ENCODE measurements at regions of chr11 and their contacts with region 1.

Region 1: DNA sequence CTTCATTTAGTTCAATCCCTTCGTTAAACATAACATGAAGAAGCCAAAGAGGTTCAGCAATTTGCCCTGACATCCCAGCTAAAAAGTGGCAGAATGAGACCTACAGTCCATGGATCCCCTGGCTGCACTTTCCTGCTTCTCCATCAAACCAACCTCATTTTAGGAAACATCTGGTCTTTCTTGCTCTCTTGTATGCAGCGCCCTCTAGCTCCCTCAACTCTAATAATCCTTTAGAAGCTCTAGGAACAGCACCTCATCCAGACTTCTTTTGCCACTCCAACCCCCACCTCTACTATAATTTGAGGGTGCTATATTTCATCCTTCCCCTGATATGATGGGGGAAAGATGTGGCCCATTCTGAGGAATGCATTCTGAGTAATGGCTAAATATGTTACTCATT is 7.4 kb downstream of the CNTF start:
- DNase-seq: peak; percentile 45
- ATAC-seq: peak; percentile 70
- H3K4me3 Mint-ChIP-seq: no peak overlapping the region
- H3K27ac Mint-ChIP-seq: peak overlapping the region; percentile 18
- H3K4me1 Mint-ChIP-seq: peaks cover 9% of the 10 kb centered on the region
- H3K27me3 Mint-ChIP-seq: no peaks in the 10 kb centered on the region
- CTCF ChIP-seq: peak; percentile 43

Region 2: GRCh38 chr11:58043379-58043778 is 586.5 kb before region 1 on chr11:
- CTCF ChIA-PET with region 1: no interaction called
- POLR2A ChIA-PET with region 1: no interaction called
- intact Hi-C with region 1: no loop called
- DNase-seq: no peak
- ATAC-seq: no peak
- H3K4me3 Mint-ChIP-seq: no peak overlapping the region
- H3K27ac Mint-ChIP-seq: no peak overlapping the region
- H3K4me1 Mint-ChIP-seq: no peaks in the 10 kb centered on the region
- H3K27me3 Mint-ChIP-seq: peaks cover 11% of the 10 kb centered on the region
- CTCF ChIP-seq: no peak

Region 3: GRCh38 chr11:58513747-58514367 is 116.0 kb before region 1 on chr11:
- CTCF ChIA-PET with region 1: no interaction called
- POLR2A ChIA-PET with region 1: no interaction called
- intact Hi-C with region 1: no loop called
- DNase-seq: peak; percentile 35
- ATAC-seq: peak; percentile 58
- H3K4me3 Mint-ChIP-seq: no peak overlapping the region
- H3K27ac Mint-ChIP-seq: no peak overlapping the region
- H3K4me1 Mint-ChIP-seq: no peaks in the 10 kb centered on the region
- H3K27me3 Mint-ChIP-seq: no peaks in the 10 kb centered on the region
- CTCF ChIP-seq: peak; percentile 47

Region 4: DNA sequence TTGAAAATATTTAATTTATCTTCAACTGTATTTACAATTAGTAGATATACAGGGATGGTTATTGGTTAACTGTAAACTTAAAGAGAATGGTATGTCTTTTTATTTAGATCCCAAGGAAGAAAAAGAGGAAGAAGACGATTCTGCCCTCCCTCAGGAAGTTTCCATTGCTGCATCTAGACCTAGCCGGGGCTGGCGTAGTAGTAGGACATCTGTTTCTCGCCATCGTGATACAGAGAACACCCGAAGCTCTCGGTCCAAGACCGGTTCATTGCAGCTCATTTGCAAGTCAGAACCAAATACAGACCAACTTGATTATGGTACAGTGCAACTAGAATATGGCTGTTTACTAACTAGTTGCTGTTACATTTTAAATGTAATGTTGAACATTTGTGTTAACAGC is 20.1 kb before region 1 on chr11:
- CTCF ChIA-PET with region 1: interaction called, 17 read pairs
- POLR2A ChIA-PET with region 1: no interaction called
- intact Hi-C with region 1: no loop called
- DNase-seq: no peak
- ATAC-seq: no peak
- H3K4me3 Mint-ChIP-seq: no peak overlapping the region
- H3K27ac Mint-ChIP-seq: no peak overlapping the region
- H3K4me1 Mint-ChIP-seq: peaks cover 54% of the 10 kb centered on the region
- H3K27me3 Mint-ChIP-seq: no peaks in the 10 kb centered on the region
- CTCF ChIP-seq: no peak

Region 5: DNA sequence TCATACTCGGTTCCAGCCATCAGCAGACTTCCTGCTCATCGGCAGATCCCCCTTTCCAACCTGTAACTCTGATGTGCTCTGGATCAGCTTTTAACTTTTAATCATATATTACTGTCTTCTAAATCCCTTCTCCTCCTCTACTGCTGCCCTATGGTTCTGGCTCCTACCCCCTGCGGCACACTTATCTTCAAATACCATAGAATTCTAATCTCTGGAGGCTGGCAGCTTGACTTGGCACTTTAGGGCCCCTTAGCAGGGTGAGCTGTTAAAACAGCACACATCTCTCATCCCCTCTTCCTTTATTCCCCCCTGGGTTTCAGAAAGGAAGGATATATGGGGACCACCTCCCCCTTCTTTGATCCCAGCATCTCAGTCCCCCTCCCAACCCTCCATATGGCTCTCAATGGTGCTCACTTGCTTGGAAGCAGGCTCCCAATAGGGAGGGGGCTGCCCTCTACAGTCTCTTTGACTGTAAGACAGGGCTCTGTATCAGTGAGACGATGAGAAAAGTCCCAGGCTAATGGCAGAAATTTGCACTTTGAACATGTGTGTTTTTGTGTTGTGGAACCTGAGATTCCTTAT is 11.8 kb before region 1 on chr11:
- CTCF ChIA-PET with region 1: interaction called, 17 read pairs
- POLR2A ChIA-PET with region 1: interaction called, 3 read pairs
- intact Hi-C with region 1: no loop called
- DNase-seq: peak; percentile 15
- ATAC-seq: peak; percentile 67
- H3K4me3 Mint-ChIP-seq: no peak overlapping the region
- H3K27ac Mint-ChIP-seq: peak overlapping the region; percentile 27
- H3K4me1 Mint-ChIP-seq: peaks cover 32% of the 10 kb centered on the region
- H3K27me3 Mint-ChIP-seq: no peaks in the 10 kb centered on the region
- CTCF ChIP-seq: peak; percentile 17

Region 6: DNA sequence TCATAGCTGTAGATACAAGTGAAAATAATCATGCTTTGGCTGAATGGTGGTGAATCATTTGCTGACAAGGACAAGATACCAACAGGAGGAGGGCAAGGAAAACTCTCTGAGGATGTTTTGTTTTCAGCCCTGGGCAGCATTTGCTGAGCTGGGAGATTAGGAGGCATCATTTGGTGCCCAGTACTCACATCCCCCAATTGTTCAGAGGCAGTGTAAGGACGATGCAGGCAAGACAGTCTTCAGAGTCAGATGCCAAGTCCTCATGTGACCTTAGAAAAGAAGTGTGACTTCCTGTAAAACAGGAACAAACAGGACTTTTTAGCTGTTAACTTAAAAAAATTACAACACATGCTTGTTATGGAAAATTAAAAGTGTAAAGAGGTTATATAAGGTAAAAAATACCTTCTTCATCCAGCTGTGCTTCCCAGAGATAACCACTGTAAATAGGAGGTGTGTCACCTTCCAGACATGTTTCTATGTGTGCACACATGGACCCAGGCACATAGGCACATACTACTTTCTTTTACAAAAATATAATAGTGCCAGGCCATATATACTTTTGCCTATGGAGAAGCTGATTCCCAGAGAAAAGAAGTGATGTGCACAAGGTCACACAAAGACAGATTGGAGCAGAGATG is 10.6 kb after region 1 on chr11:
- CTCF ChIA-PET with region 1: interaction called, 27 read pairs
- POLR2A ChIA-PET with region 1: interaction called, 4 read pairs
- intact Hi-C with region 1: no loop called
- DNase-seq: no peak
- ATAC-seq: peak; percentile 77
- H3K4me3 Mint-ChIP-seq: no peak overlapping the region
- H3K27ac Mint-ChIP-seq: peak overlapping the region; percentile 50
- H3K4me1 Mint-ChIP-seq: peaks cover 25% of the 10 kb centered on the region
- H3K27me3 Mint-ChIP-seq: no peaks in the 10 kb centered on the region
- CTCF ChIP-seq: no peak

Region 7: DNA sequence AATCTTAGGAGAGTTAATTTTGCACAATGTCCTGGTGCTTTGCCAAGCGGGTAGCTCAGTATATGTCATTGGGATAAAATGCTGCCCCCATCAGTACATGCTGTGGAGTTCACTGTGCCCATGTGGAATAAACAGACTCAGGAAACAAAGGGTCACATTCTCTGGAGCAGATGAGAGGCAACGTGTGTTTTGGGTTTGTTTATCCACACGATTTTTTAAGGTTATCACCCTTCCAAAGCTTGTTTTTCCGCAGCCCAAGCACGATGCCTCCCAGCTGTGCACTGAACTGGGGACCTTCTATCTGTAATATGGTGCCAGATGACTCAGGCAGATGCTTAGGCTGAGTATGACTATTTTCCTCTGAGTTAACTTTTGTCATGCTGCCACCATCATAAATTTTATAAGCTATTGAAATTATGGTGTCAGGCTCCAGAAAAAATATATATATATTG is 833.4 kb after region 1 on chr11:
- CTCF ChIA-PET with region 1: no interaction called
- POLR2A ChIA-PET with region 1: no interaction called
- intact Hi-C with region 1: no loop called
- DNase-seq: no peak
- ATAC-seq: no peak
- H3K4me3 Mint-ChIP-seq: no peak overlapping the region
- H3K27ac Mint-ChIP-seq: no peak overlapping the region
- H3K4me1 Mint-ChIP-seq: no peaks in the 10 kb centered on the region
- H3K27me3 Mint-ChIP-seq: peaks cover 10% of the 10 kb centered on the region
- CTCF ChIP-seq: no peak

Measured in activated CD8-positive, alpha-beta T cell treated with anti-CD3 and anti-CD28 coated beads for 36 hours (primary cell).